Colonic mucosa (tissue), 4 donors: ENCODE measurements at regions of chr7 and their contacts with region 1.

Region 1: GRCh38 chr7:127253281-127254162 is 781 bp upstream of the GRM8 start:
- DNase-seq: peak; percentile 74
- H3K4me3 ChIP-seq: peak overlapping the region; percentile 93
- H3K27ac ChIP-seq: peak overlapping the region; percentile 32
- H3K4me1 ChIP-seq: no peaks in the 10 kb centered on the region
- H3K27me3 ChIP-seq: peaks cover 13% of the 10 kb centered on the region
- CTCF ChIP-seq: peak; percentile 94

Region 2: GRCh38 chr7:126803060-126803665 is 450.4 kb before region 1 on chr7:
- intact Hi-C with region 1: loop called (anchors 10 kb)
- DNase-seq: peak; percentile 63
- H3K4me3 ChIP-seq: no peak overlapping the region
- H3K27ac ChIP-seq: no peak overlapping the region
- H3K4me1 ChIP-seq: no peaks in the 10 kb centered on the region
- H3K27me3 ChIP-seq: no peaks in the 10 kb centered on the region
- CTCF ChIP-seq: peak; percentile 60

Region 3: DNA sequence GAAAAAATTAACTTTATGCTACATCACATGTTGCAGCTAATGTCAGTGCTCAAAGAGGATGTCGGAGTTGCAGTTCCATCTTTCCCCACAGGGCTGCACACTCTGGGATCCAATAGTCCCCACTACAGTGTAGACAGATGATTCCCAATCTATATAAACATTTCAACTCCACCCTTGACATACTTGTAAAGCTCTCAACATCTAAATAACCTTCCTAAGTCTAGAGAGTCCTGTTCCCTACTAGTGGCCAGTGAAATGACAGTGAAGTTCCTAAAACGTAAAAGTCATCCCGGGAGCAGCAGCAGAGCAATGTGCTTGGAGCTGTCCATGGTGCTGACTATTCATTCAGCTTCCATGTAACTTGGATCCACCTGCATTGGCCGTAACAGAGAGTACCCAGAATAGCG is 145.9 kb before region 1 on chr7:
- intact Hi-C with region 1: loop called (anchors 5 kb)
- DNase-seq: peak; percentile 58
- H3K4me3 ChIP-seq: no peak overlapping the region
- H3K27ac ChIP-seq: no peak overlapping the region
- H3K4me1 ChIP-seq: no peaks in the 10 kb centered on the region
- H3K27me3 ChIP-seq: no peaks in the 10 kb centered on the region
- CTCF ChIP-seq: peak; percentile 56

Region 4: DNA sequence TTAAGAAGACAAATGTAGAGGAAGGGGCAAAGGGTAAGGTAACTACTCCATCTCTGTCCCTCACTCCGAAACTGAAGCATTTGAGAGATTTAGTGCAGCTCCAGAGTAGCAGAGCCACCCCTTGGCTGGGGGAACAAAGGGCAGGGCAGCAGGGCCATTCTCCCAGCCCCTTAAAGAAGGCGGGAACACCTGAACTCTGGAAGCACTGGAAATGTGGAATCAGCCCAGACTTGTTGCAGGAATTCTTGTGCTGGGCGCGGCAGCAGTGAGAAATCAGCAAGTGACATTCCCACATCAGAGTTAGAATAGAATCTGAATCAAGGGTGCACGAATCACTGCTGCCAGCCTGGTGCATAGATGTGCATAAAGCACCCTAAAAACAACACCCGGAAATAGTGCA is 33.6 kb after region 1 on chr7:
- intact Hi-C with region 1: no loop called
- DNase-seq: no peak
- H3K4me3 ChIP-seq: no peak overlapping the region
- H3K27ac ChIP-seq: no peak overlapping the region
- H3K4me1 ChIP-seq: no peaks in the 10 kb centered on the region
- H3K27me3 ChIP-seq: no peaks in the 10 kb centered on the region
- CTCF ChIP-seq: no peak

Region 5: GRCh38 chr7:127337581-127337980 is 84.1 kb after region 1 on chr7:
- intact Hi-C with region 1: no loop called
- DNase-seq: peak; percentile 62
- H3K4me3 ChIP-seq: no peak overlapping the region
- H3K27ac ChIP-seq: no peak overlapping the region
- H3K4me1 ChIP-seq: no peaks in the 10 kb centered on the region
- H3K27me3 ChIP-seq: no peaks in the 10 kb centered on the region
- CTCF ChIP-seq: no peak

Region 6: DNA sequence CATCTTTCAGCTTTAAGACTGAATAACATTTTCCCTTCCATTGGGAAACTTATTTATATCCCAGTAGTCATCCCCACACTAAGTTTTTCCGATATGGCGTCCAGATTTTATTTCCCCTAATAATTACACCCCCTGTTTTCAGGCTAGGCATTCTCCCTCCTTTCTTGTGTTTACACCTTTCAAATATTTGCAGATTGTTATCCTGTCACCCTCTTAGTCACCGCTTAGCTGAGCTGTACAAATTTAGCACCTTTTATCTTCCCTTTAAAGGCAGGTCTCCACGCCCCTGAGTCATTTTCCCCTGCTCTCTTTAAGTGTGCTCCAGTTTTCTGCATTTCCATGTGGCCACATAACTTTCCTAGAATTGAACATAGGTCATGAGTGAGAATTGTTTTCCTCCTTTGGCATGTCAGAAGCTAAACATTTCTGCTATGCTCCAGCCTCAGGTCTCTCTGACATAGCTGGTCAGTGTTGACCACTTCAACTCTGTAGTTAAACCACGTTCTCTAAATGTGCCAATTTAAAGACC is 730.3 kb after region 1 on chr7:
- intact Hi-C with region 1: no loop called
- DNase-seq: no peak
- H3K4me3 ChIP-seq: no peak overlapping the region
- H3K27ac ChIP-seq: no peak overlapping the region
- H3K4me1 ChIP-seq: no peaks in the 10 kb centered on the region
- H3K27me3 ChIP-seq: no peaks in the 10 kb centered on the region
- CTCF ChIP-seq: no peak